ENCODE measurements at regions of chr10 and their contacts with region 1.

Region 1: DNA sequence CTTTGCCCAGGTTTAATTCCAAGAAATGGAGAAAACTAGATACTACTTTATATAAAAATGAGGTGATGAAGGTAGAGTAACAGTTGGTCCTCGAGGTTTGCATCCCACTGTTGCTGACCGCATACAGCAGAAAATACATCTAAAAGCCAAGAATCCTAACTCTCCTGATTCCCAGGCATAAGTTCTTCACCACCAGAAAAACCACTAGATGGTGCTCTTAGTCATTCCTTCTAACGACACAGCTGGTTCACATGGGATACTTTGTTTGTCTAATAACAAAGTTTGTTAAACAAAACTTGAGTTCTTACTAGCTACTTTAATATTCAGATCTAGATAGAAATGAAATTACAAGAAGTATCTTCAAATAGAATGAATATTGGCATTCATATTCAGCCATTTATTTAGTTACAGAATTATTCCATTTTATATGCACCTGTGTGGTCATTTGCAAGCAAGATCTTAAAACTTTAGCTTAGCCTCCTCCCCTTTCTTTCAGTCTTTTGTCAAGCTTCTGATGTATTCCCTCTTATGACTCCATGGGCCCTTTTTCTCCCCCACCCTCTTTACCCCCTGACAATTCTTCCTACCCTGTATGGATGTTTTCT is 54.1 kb upstream of the CYP26C1 start:
- DNase-seq: peak in 1 of 35 experiments; percentile 13
- ATAC-seq: no peak
- H3K4me3 ChIP-seq: no peak overlapping the region
- H3K4me3 Mint-ChIP-seq: no peak overlapping the region
- H3K27ac ChIP-seq: no peak overlapping the region
- H3K27ac Mint-ChIP-seq: no peak overlapping the region
- H3K4me1 ChIP-seq: no peaks in the 10 kb centered on the region
- H3K4me1 Mint-ChIP-seq: no peaks in the 10 kb centered on the region
- H3K27me3 ChIP-seq: no peaks in the 10 kb centered on the region
- H3K27me3 Mint-ChIP-seq: no peaks in the 10 kb centered on the region

Region 2: GRCh38 chr10:91022924-91023699 is 1983.4 kb before region 1 on chr10:
- CTCF ChIA-PET with region 1: interaction called in 1 of 2 experiments, 15 read pairs
- POLR2A ChIA-PET with region 1: no interaction called
- DNase-seq: no peak
- ATAC-seq: no peak
- H3K4me3 ChIP-seq: no peak overlapping the region
- H3K4me3 Mint-ChIP-seq: no peak overlapping the region
- H3K27ac ChIP-seq: no peak overlapping the region
- H3K27ac Mint-ChIP-seq: no peak overlapping the region
- H3K4me1 ChIP-seq: no peaks in the 10 kb centered on the region
- H3K4me1 Mint-ChIP-seq: no peaks in the 10 kb centered on the region
- H3K27me3 ChIP-seq: peaks cover 0 to 2% of the 10 kb centered on the region in 2 experiments
- H3K27me3 Mint-ChIP-seq: peaks cover 3% of the 10 kb centered on the region in 2 donors

Region 3: DNA sequence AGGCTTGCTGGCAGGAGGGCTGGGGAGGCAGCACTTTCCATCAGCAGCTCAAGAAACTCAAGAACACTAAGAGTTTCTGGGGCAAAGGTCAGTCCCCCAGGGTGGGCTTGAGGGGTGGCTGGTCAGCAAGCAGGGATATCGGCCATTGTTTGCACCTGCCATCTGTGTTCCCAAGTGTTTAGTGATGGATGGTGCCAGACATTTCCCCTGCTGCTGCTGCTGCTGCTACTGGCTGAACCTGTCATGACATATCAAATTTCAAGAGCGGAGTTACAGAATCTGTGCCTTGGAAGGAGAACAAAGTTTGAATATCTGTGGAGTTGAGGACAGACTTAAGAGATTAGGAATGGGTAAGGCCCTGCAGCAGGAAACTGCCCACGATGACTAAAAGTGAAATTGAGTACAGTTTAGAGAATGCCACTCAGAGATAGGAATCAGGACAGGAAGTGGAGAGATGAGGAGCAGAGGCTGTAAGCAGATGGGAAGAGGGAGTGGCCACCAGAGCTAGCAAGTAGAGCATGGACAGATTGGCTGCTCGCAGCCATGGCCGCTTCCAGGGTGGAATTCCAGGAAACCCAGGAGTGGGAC is 1334.4 kb before region 1 on chr10:
- CTCF ChIA-PET with region 1: no interaction called
- POLR2A ChIA-PET with region 1: no interaction called
- DNase-seq: no peak
- ATAC-seq: no peak
- H3K4me3 ChIP-seq: no peak overlapping the region
- H3K4me3 Mint-ChIP-seq: no peak overlapping the region
- H3K27ac ChIP-seq: no peak overlapping the region
- H3K27ac Mint-ChIP-seq: no peak overlapping the region
- H3K4me1 ChIP-seq: no peaks in the 10 kb centered on the region
- H3K4me1 Mint-ChIP-seq: peaks cover 0 to 5% (median 0%) of the 10 kb centered on the region in 3 donors
- H3K27me3 ChIP-seq: no peaks in the 10 kb centered on the region
- H3K27me3 Mint-ChIP-seq: peaks cover 6 to 9% of the 10 kb centered on the region in 2 donors